ENCODE measurements at regions of chr9 and their contacts with region 1.

Region 1: DNA sequence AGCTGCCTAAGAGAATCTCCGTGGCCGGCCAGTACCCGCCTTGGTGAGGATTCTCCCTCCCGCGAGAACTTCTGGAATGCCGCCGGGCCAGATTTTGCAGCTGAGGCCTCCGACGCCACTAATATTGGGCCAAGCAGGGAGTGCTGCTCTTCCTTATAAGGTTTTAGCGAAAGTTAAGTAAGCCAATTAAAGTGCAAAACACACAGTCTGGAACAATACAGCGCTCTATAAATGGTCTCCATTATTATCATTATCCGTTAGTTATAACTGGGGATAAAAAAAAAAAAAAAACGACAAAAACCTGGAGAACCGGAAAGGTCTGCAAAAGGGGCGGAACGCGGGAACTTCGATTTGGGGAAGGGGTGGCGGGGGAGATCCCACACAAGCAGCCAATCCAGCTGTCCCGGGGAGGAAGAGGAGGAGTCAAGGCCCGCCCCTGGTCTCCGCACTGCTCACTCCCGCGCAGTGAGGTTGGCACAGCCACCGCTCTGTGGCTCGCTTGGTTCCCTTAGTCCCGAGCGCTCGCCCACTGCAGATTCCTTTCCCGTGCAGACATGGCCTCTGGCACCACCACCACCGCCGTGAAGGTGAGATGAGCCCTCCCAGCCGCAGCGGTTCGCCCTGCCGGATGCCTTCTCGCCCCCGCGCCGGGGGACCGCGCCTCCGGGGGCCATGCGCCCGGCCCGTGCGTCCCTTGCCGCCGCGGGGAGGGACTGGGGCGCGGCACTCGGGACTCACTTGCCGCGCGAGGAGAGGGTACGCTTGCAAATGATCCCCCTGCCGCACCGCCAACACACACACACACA is at the start of gene MTAP:
- DNase-seq: peak; percentile 70
- H3K4me3 ChIP-seq: peak within 1 kb of the TSS; percentile 77
- H3K27me3 ChIP-seq: no peaks in the 10 kb centered on the region
- CTCF ChIP-seq: no peak
- polyA plus RNA-seq, gene MTAP: 14.2 and 18.2 TPM in 2 replicates

Region 2: DNA sequence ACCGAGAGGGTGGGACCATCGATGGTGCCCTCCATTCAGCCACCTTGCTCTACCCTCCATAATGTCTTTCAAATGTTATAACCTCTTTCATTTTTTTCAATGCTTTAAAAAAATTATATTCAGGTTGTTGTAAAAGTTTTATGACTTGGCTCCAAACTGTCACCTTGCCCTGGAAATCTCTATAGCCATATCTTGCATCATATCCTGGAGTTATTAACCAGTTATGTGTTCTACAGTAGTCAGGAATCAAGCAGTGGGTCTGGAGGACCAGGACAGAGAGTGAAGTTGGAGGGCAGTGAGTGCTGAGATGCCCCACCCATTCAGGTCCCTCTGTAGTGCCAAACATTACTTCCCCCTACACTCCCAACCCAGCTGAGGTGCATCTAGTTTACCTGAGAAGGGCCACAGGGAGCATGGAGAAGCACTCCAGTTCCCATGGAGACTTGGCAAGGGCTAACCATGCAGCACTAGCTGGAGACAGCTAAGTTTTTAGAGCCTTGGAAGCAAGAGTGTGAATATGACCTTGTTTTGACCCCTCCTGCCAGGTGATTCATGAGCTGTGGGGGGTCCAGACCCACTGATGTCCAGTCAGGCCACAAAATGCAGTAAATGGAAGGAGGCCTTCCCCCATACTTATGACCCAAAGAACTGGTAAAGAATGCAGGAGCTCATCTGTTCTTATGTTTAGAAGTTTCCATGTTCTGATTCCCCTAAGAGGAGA is 388.0 kb before region 1 on chr9:
- CTCF ChIA-PET with region 1: no interaction called
- POLR2A ChIA-PET with region 1: interaction called, 12 read pairs
- DNase-seq: no peak
- H3K4me3 ChIP-seq: no peak overlapping the region
- H3K27me3 ChIP-seq: peaks cover 4% of the 10 kb centered on the region; the same call in 1 of the 2 replicates
- CTCF ChIP-seq: no peak

Region 3: GRCh38 chr9:21770877-21771560 is 31.4 kb before region 1 on chr9:
- CTCF ChIA-PET with region 1: no interaction called
- POLR2A ChIA-PET with region 1: interaction called, 16 read pairs
- DNase-seq: peak; percentile 25
- H3K4me3 ChIP-seq: no peak overlapping the region
- H3K27me3 ChIP-seq: no peaks in the 10 kb centered on the region
- CTCF ChIP-seq: no peak

Region 4: DNA sequence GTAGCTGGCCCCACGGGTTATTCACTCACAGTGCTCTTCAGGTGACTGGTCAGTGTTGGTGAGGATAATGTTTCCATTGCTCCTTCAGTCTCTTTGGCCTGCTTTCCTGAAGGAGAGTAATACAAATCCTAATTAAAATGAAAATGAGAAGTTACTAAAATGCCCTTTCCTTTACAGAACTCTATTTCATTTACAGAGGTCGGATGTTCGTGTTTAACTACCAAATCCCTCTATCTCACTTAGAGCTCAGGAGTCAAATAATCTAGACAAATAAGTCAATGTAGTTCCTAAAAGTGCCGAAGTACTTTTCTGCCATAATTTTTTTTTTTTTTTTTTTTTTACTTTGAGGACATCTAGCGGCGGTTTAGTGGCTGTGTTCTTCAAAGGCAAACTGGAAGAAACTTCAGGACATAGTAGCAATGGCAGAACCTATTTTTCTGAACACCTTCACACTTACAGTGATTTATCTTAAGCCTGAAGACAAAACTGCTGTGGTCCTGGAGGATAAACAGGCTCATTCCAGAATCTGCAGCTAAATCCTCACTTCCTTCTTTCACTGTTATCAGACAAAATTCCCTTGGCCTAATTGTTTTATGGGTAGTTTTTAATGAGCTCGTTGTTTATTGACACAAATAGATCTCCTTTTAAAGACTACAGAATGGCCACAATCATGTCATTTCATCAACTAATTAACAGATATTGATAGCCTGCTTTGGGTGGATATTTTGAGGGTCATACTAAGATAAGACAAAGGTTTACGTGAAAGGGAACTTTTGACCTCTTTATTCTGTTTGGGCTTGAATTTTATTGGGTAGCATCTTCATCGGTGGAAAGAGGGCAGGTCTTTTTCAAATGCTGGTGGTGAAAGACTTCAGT is 436.6 kb after region 1 on chr9:
- CTCF ChIA-PET with region 1: interaction called, 10 read pairs
- POLR2A ChIA-PET with region 1: no interaction called
- DNase-seq: no peak
- H3K4me3 ChIP-seq: no peak overlapping the region
- H3K27me3 ChIP-seq: no peaks in the 10 kb centered on the region
- CTCF ChIP-seq: peak; percentile 63

Region 5: DNA sequence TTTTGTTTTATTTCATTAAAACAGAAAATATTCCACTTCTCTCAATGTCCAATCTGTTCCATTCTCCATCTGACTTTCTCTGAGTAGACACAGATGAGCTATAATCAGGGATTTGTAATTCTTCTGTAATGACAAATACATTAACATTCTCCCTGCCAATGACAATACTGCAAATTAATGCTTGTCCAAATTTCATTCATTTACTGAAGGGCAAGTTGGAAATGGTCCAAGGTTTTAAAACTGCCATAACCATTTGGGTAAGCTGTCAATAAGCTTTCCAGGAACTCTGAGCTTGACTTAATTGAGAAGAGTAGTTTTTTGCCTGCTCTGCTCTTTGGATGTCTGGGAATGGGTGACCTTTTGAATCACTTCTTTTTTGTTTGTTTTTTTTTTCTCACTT is 897.8 kb after region 1 on chr9:
- CTCF ChIA-PET with region 1: no interaction called
- POLR2A ChIA-PET with region 1: no interaction called
- DNase-seq: no peak
- H3K4me3 ChIP-seq: no peak overlapping the region
- H3K27me3 ChIP-seq: no peaks in the 10 kb centered on the region
- CTCF ChIP-seq: no peak

Measured in BJ (cell line).